CD8-positive, alpha-beta T cell (primary cell): ENCODE measurements at regions of chr1 and their contacts with region 1.

Region 1: DNA sequence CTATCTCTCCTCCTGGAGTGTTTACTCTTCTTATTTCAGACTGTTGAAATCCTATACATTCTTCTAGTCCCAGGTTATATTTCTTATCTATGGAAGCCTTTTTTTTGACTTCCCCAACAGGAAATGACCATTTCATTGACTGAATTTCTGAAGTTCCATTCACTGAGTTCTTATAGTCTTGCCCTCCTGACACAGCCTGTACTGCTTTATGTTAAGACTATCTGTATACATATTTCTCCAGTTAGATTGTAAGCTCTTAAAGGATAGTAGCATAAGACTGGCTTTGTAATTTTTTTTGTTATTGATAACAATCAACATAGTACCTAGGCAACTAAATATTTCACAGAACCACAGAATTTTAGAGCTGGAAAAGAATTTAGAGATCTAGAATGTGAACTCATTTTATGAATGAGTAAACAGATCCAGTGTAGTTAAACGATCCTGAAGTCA is 14.9 kb upstream of the MACF1 start:
- DNase-seq: no peak
- ATAC-seq: no peak
- H3K4me3 ChIP-seq: no peak overlapping the region
- H3K4me3 Mint-ChIP-seq: no peak overlapping the region
- H3K27ac ChIP-seq: no peak overlapping the region
- H3K27ac Mint-ChIP-seq: peak overlapping the region; percentile 16
- H3K4me1 ChIP-seq: peaks cover 41% of the 10 kb centered on the region
- H3K4me1 Mint-ChIP-seq: peaks cover 52% of the 10 kb centered on the region
- H3K27me3 ChIP-seq: no peaks in the 10 kb centered on the region
- H3K27me3 Mint-ChIP-seq: no peaks in the 10 kb centered on the region
- CTCF ChIP-seq: no peak

Region 2: GRCh38 chr1:39105061-39105840 is 84.4 kb before region 1 on chr1:
- CTCF ChIA-PET with region 1: interaction called, 84 read pairs
- POLR2A ChIA-PET with region 1: interaction called, 4 read pairs
- intact Hi-C with region 1: loop called in 1 of 2 experiments (anchors 1 kb)
- DNase-seq: peak; percentile 27 to 78 (median 57)
- ATAC-seq: peak; percentile 79
- H3K4me3 ChIP-seq: peak overlapping the region; percentile 53 to 60
- H3K4me3 Mint-ChIP-seq: peak overlapping the region; percentile 86
- H3K27ac ChIP-seq: no peak overlapping the region
- H3K27ac Mint-ChIP-seq: no peak overlapping the region
- H3K4me1 ChIP-seq: peaks cover 26% of the 10 kb centered on the region
- H3K4me1 Mint-ChIP-seq: peaks cover 30% of the 10 kb centered on the region
- H3K27me3 ChIP-seq: peaks cover 0 to 3% of the 10 kb centered on the region in 2 experiments
- H3K27me3 Mint-ChIP-seq: peaks cover 2% of the 10 kb centered on the region
- CTCF ChIP-seq: no peak

Region 3: GRCh38 chr1:39230261-39231190 is 40.9 kb after region 1 on chr1:
- CTCF ChIA-PET with region 1: interaction called, 44 read pairs
- POLR2A ChIA-PET with region 1: interaction called, 5 read pairs
- intact Hi-C with region 1: loop called in 1 of 2 experiments (anchors 5 kb)
- DNase-seq: peak in 3 of 9 experiments; percentile 19 to 45 (median 24)
- ATAC-seq: peak; percentile 49
- H3K4me3 ChIP-seq: no peak overlapping the region
- H3K4me3 Mint-ChIP-seq: peak overlapping the region; percentile 16
- H3K27ac ChIP-seq: peak overlapping the region in 1 of 2 experiments; percentile 73
- H3K27ac Mint-ChIP-seq: peak overlapping the region; percentile 79
- H3K4me1 ChIP-seq: peaks cover 32% of the 10 kb centered on the region
- H3K4me1 Mint-ChIP-seq: peaks cover 59% of the 10 kb centered on the region
- H3K27me3 ChIP-seq: no peaks in the 10 kb centered on the region
- H3K27me3 Mint-ChIP-seq: no peaks in the 10 kb centered on the region
- CTCF ChIP-seq: no peak